ENCODE measurements at regions of chr12 and their contacts with region 1.

Region 1: GRCh38 chr12:10153271-10154144 is 18.4 kb downstream of the OLR1 start:
- DNase-seq: peak; percentile 55 to 78
- ATAC-seq: peak; percentile 97
- H3K4me3 ChIP-seq: peak overlapping the region; percentile 44
- H3K27ac ChIP-seq: peak overlapping the region; percentile 63 to 93
- H3K4me1 ChIP-seq: 0 out of 3 replicates have a peak, but pooled peaks cover 4% of the 10 kb centered on the region
- CTCF ChIP-seq: peak; percentile 89
- EP300 ChIP-seq: no peak
- POLR2A ChIP-seq: peak; percentile 49
- RAD21 ChIP-seq: peak; percentile 71 to 79

Region 2: GRCh38 chr12:10171954-10172353 is 18.4 kb after region 1 on chr12 and contains the start of gene OLR1:
- CTCF ChIA-PET with region 1: interaction called, 10 read pairs
- POLR2A ChIA-PET with region 1: interaction called, 5 read pairs
- DNase-seq: no peak
- ATAC-seq: no peak
- H3K4me3 ChIP-seq: no peak within 1 kb of the TSS
- H3K27ac ChIP-seq: no peak within 1 kb of the TSS
- H3K4me1 ChIP-seq: peaks cover 27% of the 10 kb centered on the region; the same call in 2 of the 3 replicates
- CTCF ChIP-seq: no peak
- EP300 ChIP-seq: no peak
- POLR2A ChIP-seq: no peak
- RAD21 ChIP-seq: no peak
- polyA plus RNA-seq, gene OLR1: 0.59 and 0.95 TPM in 2 replicates

Region 3: GRCh38 chr12:10190558-10191388 is 37.3 kb after region 1 on chr12:
- CTCF ChIA-PET with region 1: interaction called, 89 read pairs
- POLR2A ChIA-PET with region 1: interaction called, 3 read pairs
- DNase-seq: peak; percentile 75 to 78
- ATAC-seq: peak; percentile 99 to 100
- H3K4me3 ChIP-seq: no peak overlapping the region
- H3K27ac ChIP-seq: 0 out of 6 replicates have a peak overlapping the region, but pooled peaks of 1 of the 2 experiments have one; percentile 12
- H3K4me1 ChIP-seq: peaks cover 15% of the 10 kb centered on the region; the same call in 2 of the 3 replicates
- CTCF ChIP-seq: peak; percentile 75
- EP300 ChIP-seq: no peak
- POLR2A ChIP-seq: no peak
- RAD21 ChIP-seq: peak; percentile 77 to 81

Region 4: GRCh38 chr12:10207136-10207535 is 53.6 kb after region 1 on chr12:
- CTCF ChIA-PET with region 1: interaction called, 14 read pairs
- POLR2A ChIA-PET with region 1: interaction called, 17 read pairs
- DNase-seq: no peak
- ATAC-seq: no peak
- H3K4me3 ChIP-seq: no peak overlapping the region
- H3K27ac ChIP-seq: no peak overlapping the region
- H3K4me1 ChIP-seq: 0 out of 3 replicates have a peak, but pooled peaks cover 6% of the 10 kb centered on the region
- CTCF ChIP-seq: no peak
- EP300 ChIP-seq: no peak
- POLR2A ChIP-seq: no peak
- RAD21 ChIP-seq: no peak

Region 5: GRCh38 chr12:10212201-10213131 is 59.0 kb after region 1 on chr12 and contains the start of gene GABARAPL1:
- CTCF ChIA-PET with region 1: interaction called, 14 read pairs
- POLR2A ChIA-PET with region 1: interaction called, 17 read pairs
- DNase-seq: peak; percentile 98 to 99
- ATAC-seq: peak; percentile 89 to 94
- H3K4me3 ChIP-seq: peak within 1 kb of the TSS; percentile 95
- H3K27ac ChIP-seq: peak within 1 kb of the TSS; percentile 77 to 90
- H3K4me1 ChIP-seq: peaks cover 17% of the 10 kb centered on the region
- CTCF ChIP-seq: no peak
- EP300 ChIP-seq: peak in 1 of 2 experiments; percentile 14; a peak in 2 of 5 replicates
- POLR2A ChIP-seq: no peak
- RAD21 ChIP-seq: no peak
- polyA plus RNA-seq, gene GABARAPL1: 46.2 and 58.6 TPM in 2 replicates